ENCODE measurements at regions of chr5 and their contacts with region 1.

Region 1: DNA sequence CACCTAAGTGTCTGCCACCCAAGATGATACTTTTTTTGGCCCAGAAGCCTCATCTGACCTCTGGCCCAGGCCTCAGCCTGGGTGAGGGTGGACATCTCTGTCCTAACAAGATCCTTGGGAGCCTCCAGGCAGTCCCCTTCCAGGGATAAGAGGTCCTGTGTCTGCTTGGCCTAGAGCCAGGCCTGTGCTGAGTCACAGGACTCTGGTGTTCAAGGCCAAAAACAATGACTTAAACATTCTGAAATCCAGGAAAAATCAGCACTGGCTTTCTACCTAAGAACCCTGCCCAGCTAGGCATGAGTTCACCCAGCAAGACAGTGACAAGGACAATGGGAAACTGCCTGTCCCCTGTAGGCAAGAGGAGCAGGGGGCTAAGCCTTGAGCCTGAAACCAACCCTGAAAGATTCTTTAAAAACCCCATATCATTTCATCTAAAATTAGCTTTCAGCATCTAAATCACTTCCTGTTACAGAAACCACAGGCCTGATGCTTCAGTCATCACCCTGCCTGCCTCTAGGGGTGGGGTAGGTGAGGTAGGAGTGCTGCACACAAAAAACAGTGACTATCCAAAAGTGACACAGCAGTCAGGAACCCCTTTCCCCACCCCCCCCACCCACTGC is 29.9 kb downstream of the CSF2 start:
- DNase-seq: peak; percentile 84
- H3K4me3 Mint-ChIP-seq: peak overlapping the region; percentile 38
- H3K27ac Mint-ChIP-seq: peak overlapping the region; percentile 86
- H3K4me1 Mint-ChIP-seq: peaks cover 74% of the 10 kb centered on the region
- H3K27me3 Mint-ChIP-seq: no peaks in the 10 kb centered on the region

Region 2: GRCh38 chr5:131622633-131623032 is 480.8 kb before region 1 on chr5:
- CTCF ChIA-PET with region 1: no interaction called
- POLR2A ChIA-PET with region 1: no interaction called
- intact Hi-C with region 1: no loop called
- DNase-seq: no peak
- H3K4me3 Mint-ChIP-seq: no peak overlapping the region
- H3K27ac Mint-ChIP-seq: no peak overlapping the region
- H3K4me1 Mint-ChIP-seq: peaks cover 62% of the 10 kb centered on the region
- H3K27me3 Mint-ChIP-seq: no peaks in the 10 kb centered on the region

Region 3: GRCh38 chr5:131974956-131975726 is 128.3 kb before region 1 on chr5:
- CTCF ChIA-PET with region 1: no interaction called
- POLR2A ChIA-PET with region 1: no interaction called
- intact Hi-C with region 1: no loop called
- DNase-seq: peak; percentile 29
- H3K4me3 Mint-ChIP-seq: peak overlapping the region; percentile 56
- H3K27ac Mint-ChIP-seq: peak overlapping the region; percentile 76
- H3K4me1 Mint-ChIP-seq: peaks cover 44% of the 10 kb centered on the region
- H3K27me3 Mint-ChIP-seq: no peaks in the 10 kb centered on the region

Region 4: GRCh38 chr5:132019857-132020555 is 83.4 kb before region 1 on chr5:
- CTCF ChIA-PET with region 1: no interaction called
- POLR2A ChIA-PET with region 1: no interaction called
- intact Hi-C with region 1: loop called (anchors 1 kb)
- DNase-seq: peak; percentile 91
- H3K4me3 Mint-ChIP-seq: peak overlapping the region; percentile 11
- H3K27ac Mint-ChIP-seq: peak overlapping the region; percentile 90
- H3K4me1 Mint-ChIP-seq: peaks cover 52% of the 10 kb centered on the region
- H3K27me3 Mint-ChIP-seq: peaks cover 22% of the 10 kb centered on the region

Region 5: DNA sequence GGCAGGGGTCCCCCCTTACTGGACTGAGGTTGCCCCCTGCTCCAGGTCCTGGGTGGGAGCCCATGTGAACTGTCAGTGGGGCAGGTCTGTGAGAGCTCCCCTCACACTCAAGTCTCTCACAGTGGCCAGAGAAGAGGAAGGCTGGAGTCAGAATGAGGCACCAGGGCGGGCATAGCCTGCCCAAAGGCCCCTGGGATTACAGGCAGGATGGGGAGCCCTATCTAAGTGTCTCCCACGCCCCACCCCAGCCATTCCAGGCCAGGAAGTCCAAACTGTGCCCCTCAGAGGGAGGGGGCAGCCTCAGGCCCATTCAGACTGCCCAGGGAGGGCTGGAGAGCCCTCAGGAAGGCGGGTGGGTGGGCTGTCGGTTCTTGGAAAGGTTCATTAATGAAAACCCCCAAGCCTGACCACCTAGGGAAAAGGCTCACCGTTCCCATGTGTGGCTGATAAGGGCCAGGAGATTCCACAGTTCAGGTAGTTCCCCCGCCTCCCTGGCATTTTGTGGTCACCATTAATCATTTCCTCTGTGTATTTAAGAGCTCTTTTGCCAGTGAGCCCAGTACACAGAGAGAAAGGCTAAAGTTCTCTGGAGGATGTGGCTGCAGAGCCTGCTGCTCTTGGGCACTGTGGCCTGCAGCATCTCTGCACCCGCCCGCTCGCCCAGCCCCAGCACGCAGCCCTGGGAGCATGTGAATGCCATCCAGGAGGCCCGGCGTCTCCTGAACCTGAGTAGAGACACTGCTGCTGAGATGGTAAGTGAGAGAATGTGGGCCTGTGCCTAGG is 30.0 kb before region 1 on chr5 and contains the start of gene CSF2:
- CTCF ChIA-PET with region 1: interaction called, 5 read pairs
- POLR2A ChIA-PET with region 1: interaction called, 3 read pairs
- intact Hi-C with region 1: loop called (anchors 1 kb)
- DNase-seq: peak; percentile 50
- H3K4me3 Mint-ChIP-seq: peak within 1 kb of the TSS; percentile 61
- H3K27ac Mint-ChIP-seq: peak within 1 kb of the TSS; percentile 69
- H3K4me1 Mint-ChIP-seq: peaks cover 56% of the 10 kb centered on the region
- H3K27me3 Mint-ChIP-seq: no peaks in the 10 kb centered on the region
- total RNA-seq, gene CSF2: 125 to 128 TPM

Region 6: DNA sequence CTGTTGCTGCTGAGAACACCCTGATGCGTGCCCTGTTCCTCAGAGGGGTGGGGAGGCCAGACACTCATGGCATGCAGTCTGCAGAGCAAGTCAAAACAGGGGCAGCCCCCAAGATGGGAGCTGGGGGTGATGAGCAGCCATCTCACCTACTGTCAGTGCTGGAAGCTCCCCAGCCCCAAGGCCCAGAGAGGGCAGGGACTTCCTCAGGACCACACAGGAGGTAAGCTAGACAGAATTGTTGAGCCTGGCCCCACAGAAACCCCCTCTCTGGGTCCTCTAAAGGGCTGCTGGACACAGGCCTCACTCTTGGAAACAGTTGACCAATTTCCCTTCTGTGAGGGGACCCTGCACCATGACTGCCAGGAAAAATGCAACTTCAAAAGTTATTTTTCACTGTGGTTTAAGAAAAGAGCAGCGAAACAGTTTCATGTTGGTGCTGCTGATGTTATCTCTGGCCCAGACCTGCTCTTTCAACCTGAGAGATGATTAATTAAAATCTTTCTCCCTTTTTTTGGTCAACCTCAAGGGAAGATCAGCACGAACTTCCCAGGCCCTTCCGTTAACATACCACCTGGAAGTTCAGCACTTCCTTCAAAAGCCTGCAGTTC is 20.3 kb before region 1 on chr5:
- CTCF ChIA-PET with region 1: interaction called, 6 read pairs
- POLR2A ChIA-PET with region 1: interaction called, 6 read pairs
- intact Hi-C with region 1: loop called (anchors 1 kb)
- DNase-seq: peak; percentile 69
- H3K4me3 Mint-ChIP-seq: no peak overlapping the region
- H3K27ac Mint-ChIP-seq: peak overlapping the region; percentile 44
- H3K4me1 Mint-ChIP-seq: peaks cover 50% of the 10 kb centered on the region
- H3K27me3 Mint-ChIP-seq: no peaks in the 10 kb centered on the region

Region 7: DNA sequence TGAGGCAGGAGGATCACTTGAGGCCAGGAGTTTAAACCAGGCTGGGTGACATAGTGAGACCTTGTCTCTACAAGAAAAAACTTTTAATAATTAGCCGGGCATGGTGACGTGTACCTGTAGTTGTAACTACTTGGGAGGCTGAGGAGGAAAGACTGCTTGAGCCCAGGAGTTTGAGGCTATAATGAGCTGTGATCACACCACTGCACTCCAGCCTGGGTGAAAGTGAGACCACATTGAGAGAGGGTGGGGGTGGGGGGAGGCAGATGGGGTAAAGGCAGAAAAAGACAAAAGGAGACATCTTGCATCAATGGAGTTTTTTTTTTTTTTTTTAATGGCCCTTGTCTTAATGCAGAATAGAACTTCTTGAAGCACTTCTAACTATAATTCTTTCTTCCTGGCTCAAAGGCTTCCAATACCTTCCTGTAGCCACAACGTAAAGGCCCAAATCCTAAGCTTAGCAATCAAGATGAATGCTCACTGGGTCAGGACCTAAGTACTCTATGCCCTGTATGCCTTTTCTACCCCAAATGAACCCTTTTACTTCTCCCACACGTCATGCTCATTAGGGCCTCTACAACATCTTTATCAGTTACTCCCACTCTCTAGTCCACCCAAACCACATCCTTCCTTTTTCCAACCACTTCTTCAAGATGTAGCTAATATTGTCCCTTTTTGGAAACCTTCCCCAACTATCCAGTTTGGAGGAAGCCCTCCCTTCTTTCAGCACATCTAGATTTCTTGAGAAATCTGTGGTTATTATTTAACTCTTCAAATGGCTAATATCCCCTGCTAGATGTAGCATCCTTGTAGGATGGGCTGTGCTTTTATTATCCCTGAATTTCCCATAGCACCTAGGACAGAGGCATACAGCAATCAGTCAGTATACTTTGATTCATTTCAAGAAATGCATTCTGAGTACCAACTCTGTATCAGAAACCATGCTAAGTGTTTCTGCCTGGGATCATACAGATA is 11.0 kb after region 1 on chr5:
- CTCF ChIA-PET with region 1: interaction called, 5 read pairs
- POLR2A ChIA-PET with region 1: interaction called, 65 read pairs
- intact Hi-C with region 1: loop called (anchors 1 kb)
- DNase-seq: no peak
- H3K4me3 Mint-ChIP-seq: no peak overlapping the region
- H3K27ac Mint-ChIP-seq: peak overlapping the region; percentile 39
- H3K4me1 Mint-ChIP-seq: peaks cover 73% of the 10 kb centered on the region
- H3K27me3 Mint-ChIP-seq: no peaks in the 10 kb centered on the region

Region 8: DNA sequence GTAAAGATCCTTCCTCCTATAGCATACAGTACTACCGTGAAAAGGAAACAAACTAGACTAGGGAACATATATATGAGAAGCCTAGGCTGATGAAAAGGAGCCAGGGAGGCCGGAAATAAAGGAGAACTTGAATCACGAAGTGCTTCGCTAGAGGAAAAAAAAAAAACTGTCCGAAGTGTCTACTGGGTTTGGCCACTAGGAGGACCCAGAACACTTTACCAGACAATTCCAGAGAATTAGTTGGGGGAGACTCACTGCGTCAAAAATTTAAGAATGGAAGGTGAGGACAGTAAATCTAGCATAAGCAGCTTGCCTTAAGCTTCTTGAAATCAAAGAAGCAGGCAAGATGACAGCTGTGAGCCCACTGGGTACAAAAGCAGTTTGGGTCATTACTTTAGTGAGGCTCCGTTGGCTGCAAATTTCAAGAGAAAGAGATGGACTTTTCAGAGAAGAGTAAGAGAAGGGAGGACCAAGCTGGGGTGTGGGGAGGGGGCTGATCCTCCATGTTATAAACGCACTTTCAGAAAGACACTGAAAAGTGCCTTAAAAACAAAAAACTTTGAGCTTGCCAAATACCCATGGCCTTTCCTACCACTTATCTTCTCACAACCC is 76.8 kb after region 1 on chr5:
- CTCF ChIA-PET with region 1: interaction called, 6 read pairs
- POLR2A ChIA-PET with region 1: no interaction called
- intact Hi-C with region 1: loop called (anchors 1 kb)
- DNase-seq: no peak
- H3K4me3 Mint-ChIP-seq: no peak overlapping the region
- H3K27ac Mint-ChIP-seq: peak overlapping the region; percentile 1
- H3K4me1 Mint-ChIP-seq: peaks cover 32% of the 10 kb centered on the region
- H3K27me3 Mint-ChIP-seq: no peaks in the 10 kb centered on the region

Region 9: DNA sequence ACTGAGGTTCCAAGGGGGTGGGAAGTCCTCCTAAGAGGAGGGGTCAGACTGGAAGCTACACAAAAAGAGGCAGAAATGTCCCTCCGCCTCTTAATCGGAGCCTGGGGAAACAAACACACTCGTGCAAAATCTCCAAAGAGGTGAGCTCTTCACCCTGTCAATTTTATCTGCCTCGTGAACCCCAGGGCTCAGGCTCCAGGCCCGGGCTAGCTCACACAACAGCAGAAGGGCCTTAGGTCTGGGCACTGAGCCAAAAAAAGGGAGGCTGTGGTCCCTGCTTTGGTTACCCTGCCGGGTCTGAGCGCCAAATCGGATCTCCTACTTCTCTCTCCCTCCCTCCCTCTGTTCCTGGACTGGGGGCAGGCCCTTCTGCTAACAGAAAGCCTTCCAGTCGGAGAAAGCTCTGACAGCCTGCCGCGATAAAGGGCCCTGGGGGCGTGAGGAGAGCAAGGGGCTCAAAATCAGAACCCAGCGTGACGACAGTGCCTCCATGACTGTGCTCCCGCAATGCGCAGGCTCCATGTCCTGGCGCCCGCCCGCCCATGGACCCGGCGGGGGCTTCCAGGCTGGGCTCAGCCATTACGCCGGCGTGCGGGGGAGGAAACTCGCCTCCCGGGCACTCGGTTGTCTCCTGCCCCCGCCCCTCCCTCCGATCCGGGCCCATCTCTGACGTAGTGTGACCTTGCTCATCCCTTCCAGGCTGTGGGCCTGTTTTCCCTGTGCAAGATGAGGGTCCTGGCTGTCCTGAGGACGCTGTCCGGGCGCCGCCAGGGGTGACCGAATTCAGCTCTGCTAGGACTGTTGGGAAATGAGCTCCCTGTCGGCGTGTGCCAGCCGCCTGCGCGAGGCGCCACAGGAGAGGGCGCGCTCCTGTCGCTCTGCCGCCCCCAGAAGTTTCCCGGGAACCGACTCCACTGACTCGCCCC is 189.9 kb after region 1 on chr5:
- CTCF ChIA-PET with region 1: no interaction called
- POLR2A ChIA-PET with region 1: no interaction called
- intact Hi-C with region 1: loop called (anchors 2 kb)
- DNase-seq: peak; percentile 87
- H3K4me3 Mint-ChIP-seq: peak overlapping the region; percentile 90
- H3K27ac Mint-ChIP-seq: peak overlapping the region; percentile 82
- H3K4me1 Mint-ChIP-seq: peaks cover 21% of the 10 kb centered on the region
- H3K27me3 Mint-ChIP-seq: peaks cover 10% of the 10 kb centered on the region

Measured in activated CD4-positive, alpha-beta memory T cell treated with anti-CD3 and anti-CD28 coated beads for 36 hours (primary cell).